Activated T-helper 1 cell treated with anti-CD3 and anti-CD28 coated beads, Interleukin-12 subunit alpha, Interleukin-12 subunit beta, Interleukin-2, Interleukin-4 antibody, amounts not matched to agents 30 ng/mL and 10 ng/mL and 1 ng/mL, durations not matched to agents 14 hours and 24 hours and 36 hours (primary cell): ENCODE measurements at regions of chr21 and their contacts with region 1.

Region 1: GRCh38 chr21:29298348-29299045 is at the start of gene BACH1:
- DNase-seq: peak; percentile 78
- H3K4me3 Mint-ChIP-seq: peak within 1 kb of the TSS; percentile 91
- H3K27ac Mint-ChIP-seq: peak within 1 kb of the TSS; percentile 88
- H3K4me1 Mint-ChIP-seq: peaks cover 59% of the 10 kb centered on the region
- H3K27me3 Mint-ChIP-seq: peaks cover 4% of the 10 kb centered on the region
- total RNA-seq, gene BACH1: 22.7 and 23.1 TPM in 2 replicates

Region 2: GRCh38 chr21:29024474-29025327 is 273.8 kb before region 1 on chr21 and contains the start of gene USP16:
- intact Hi-C with region 1: loop called (anchors 1 kb)
- DNase-seq: peak; percentile 95
- H3K4me3 Mint-ChIP-seq: peak within 1 kb of the TSS; percentile 99
- H3K27ac Mint-ChIP-seq: peak within 1 kb of the TSS; percentile 97
- H3K4me1 Mint-ChIP-seq: peaks cover 39% of the 10 kb centered on the region
- H3K27me3 Mint-ChIP-seq: no peaks in the 10 kb centered on the region
- total RNA-seq, gene USP16: 44.7 and 48.7 TPM in 2 replicates

Region 3: GRCh38 chr21:29145354-29145782 is 153.1 kb before region 1 on chr21:
- intact Hi-C with region 1: loop called (anchors 1 kb)
- DNase-seq: no peak
- H3K4me3 Mint-ChIP-seq: no peak overlapping the region
- H3K27ac Mint-ChIP-seq: no peak overlapping the region
- H3K4me1 Mint-ChIP-seq: peaks cover 24% of the 10 kb centered on the region
- H3K27me3 Mint-ChIP-seq: no peaks in the 10 kb centered on the region

Region 4: GRCh38 chr21:29232601-29233546 is 65.6 kb before region 1 on chr21:
- intact Hi-C with region 1: loop called (anchors 1 kb)
- DNase-seq: no peak
- H3K4me3 Mint-ChIP-seq: no peak overlapping the region
- H3K27ac Mint-ChIP-seq: no peak overlapping the region
- H3K4me1 Mint-ChIP-seq: peaks cover 51% of the 10 kb centered on the region
- H3K27me3 Mint-ChIP-seq: peaks cover 30% of the 10 kb centered on the region

Region 5: GRCh38 chr21:29372063-29372802 is 73.7 kb after region 1 on chr21:
- intact Hi-C with region 1: loop called (anchors 1 kb)
- DNase-seq: peak; percentile 39
- H3K4me3 Mint-ChIP-seq: no peak overlapping the region
- H3K27ac Mint-ChIP-seq: no peak overlapping the region
- H3K4me1 Mint-ChIP-seq: peaks cover 30% of the 10 kb centered on the region
- H3K27me3 Mint-ChIP-seq: no peaks in the 10 kb centered on the region